Activated T-helper 1 cell treated with anti-CD3 and anti-CD28 coated beads, Interleukin-12 subunit alpha, Interleukin-12 subunit beta, Interleukin-2, Interleukin-4 antibody, amounts not matched to agents 30 ng/mL and 10 ng/mL and 1 ng/mL, durations not matched to agents 14 hours and 24 hours and 36 hours (primary cell): ENCODE measurements at regions of chrX and their contacts with region 1.

Region 1: DNA sequence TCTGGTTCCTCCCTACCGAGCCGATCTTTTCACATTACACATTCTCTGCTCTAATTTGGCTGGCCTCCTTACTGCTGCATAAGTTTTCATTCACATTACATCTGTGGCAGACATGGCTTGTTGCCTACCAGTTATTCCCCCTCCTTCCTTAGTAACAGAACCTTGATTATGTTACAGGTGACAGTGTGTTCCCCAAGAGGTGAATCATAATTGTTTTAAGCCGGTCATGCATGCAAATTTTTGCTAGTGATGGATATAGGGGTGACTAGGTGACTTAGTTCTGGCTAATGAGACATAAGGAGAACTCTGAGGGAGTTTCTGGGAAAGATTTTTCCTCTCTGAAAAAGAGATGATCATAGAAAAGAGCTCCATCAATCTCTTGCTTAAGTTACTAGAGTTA is 8.4 kb upstream of the LAMP2 start:
- DNase-seq: no peak
- H3K4me3 Mint-ChIP-seq: no peak overlapping the region
- H3K27ac Mint-ChIP-seq: no peak overlapping the region
- H3K4me1 Mint-ChIP-seq: no peaks in the 10 kb centered on the region
- H3K27me3 Mint-ChIP-seq: no peaks in the 10 kb centered on the region

Region 2: GRCh38 chrX:120365320-120365719 is 112.1 kb before region 1 on chrX:
- intact Hi-C with region 1: loop called (anchors 1 kb)
- DNase-seq: peak; percentile 14
- H3K4me3 Mint-ChIP-seq: no peak overlapping the region
- H3K27ac Mint-ChIP-seq: no peak overlapping the region
- H3K4me1 Mint-ChIP-seq: no peaks in the 10 kb centered on the region
- H3K27me3 Mint-ChIP-seq: peaks cover 3% of the 10 kb centered on the region

Region 3: GRCh38 chrX:120380699-120381098 is 96.8 kb before region 1 on chrX:
- intact Hi-C with region 1: loop called (anchors 1 kb)
- DNase-seq: no peak
- H3K4me3 Mint-ChIP-seq: no peak overlapping the region
- H3K27ac Mint-ChIP-seq: no peak overlapping the region
- H3K4me1 Mint-ChIP-seq: no peaks in the 10 kb centered on the region
- H3K27me3 Mint-ChIP-seq: peaks cover 6% of the 10 kb centered on the region